Mucosa of descending colon (tissue), 3 donors: ENCODE measurements at regions of chr14 and their contacts with region 1.

Region 1: GRCh38 chr14:36647824-36648753 is 13.6 kb upstream of the PAX9 start:
- DNase-seq: peak in 2 of 3 donors; percentile 28 to 36
- ATAC-seq: peak; percentile 82
- H3K4me3 ChIP-seq: no peak overlapping the region
- H3K4me1 ChIP-seq: peaks cover 10% of the 10 kb centered on the region
- CTCF ChIP-seq: peak; percentile 12

Region 2: GRCh38 chr14:36788232-36788631 is 140.1 kb after region 1 on chr14:
- intact Hi-C with region 1: no loop called
- DNase-seq: no peak
- ATAC-seq: no peak
- H3K4me3 ChIP-seq: no peak overlapping the region
- H3K4me1 ChIP-seq: no peaks in the 10 kb centered on the region
- CTCF ChIP-seq: no peak

Region 3: DNA sequence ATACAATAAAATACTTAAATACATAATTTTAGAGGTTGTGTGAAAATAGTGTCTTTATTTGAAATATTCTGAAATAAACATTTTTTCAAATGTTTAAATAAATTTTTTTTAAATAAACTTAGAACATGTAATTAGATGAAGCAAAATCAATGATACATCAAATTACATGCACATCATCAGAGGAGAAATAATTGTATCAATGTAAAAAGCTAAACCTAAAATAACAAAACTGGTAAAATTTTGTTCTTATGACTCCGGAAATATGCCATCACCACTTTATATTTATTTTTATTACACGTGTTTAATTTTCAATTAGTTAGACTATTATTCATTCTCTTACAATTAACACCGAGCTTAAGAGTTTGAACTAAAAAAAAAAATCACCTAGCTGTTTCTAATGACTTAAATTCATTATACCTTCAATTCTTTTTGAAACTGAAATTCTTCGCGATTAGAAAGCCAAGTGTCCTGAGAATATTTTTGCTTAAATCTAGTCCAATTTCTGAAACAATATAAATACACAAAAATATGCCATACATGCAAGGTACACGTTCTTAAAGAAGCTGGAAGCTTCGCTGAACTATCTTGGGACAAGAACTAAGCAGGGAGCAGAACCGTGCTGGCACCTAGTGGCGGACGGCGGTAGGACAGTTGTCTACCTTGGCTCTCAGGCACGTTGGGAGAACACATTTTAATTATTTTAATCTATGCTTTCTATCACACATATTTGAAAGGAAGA is 293.9 kb after region 1 on chr14:
- intact Hi-C with region 1: loop called in 1 of 2 experiments (anchors 5 kb)
- DNase-seq: peak; percentile 54 to 90 (median 84)
- ATAC-seq: peak; percentile 85
- H3K4me3 ChIP-seq: no peak overlapping the region
- H3K4me1 ChIP-seq: no peaks in the 10 kb centered on the region
- CTCF ChIP-seq: peak; percentile 87